ENCODE measurements at regions of chr4 and their contacts with region 1.

Region 1: GRCh38 chr4:53908661-53909078 is 155.7 kb downstream of the CHIC2 start:
- DNase-seq: peak; percentile 23
- H3K4me3 Mint-ChIP-seq: no peak overlapping the region
- H3K27ac Mint-ChIP-seq: no peak overlapping the region
- H3K4me1 Mint-ChIP-seq: peaks cover 12% of the 10 kb centered on the region
- H3K27me3 Mint-ChIP-seq: peaks cover 46% of the 10 kb centered on the region

Region 2: DNA sequence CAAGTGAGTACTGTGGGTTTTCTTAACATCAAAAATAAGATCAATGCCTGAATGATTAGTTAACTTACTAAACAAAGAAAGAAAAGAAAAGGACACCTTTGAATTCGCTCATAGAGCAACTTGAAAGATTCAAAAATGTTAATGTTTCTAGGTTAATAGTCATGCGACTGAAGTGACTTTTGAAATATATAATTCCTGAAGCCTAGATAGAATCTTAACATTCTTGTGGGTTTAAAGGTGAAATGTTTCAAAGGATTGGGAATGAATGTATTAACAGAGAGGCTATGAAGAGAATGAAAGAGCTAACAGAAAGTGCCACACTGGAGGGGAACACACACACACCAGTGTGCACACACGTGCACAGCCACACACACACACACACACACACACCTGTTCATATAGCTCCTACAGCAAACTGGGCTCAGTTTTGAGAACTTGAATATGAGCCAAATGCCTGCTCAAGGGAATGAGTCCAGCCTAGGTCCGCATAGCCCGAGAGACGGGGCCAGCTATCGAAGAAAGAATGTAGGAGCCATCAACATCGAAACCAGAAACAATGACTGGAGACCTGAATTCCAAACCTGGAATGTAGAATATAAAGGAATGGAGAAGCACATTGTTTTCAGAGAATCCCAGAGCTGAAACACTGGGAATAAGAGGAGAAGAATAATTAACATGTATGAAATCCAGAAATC is 1120.0 kb before region 1 on chr4:
- CTCF ChIA-PET with region 1: no interaction called
- intact Hi-C with region 1: no loop called
- DNase-seq: no peak
- H3K4me3 Mint-ChIP-seq: no peak overlapping the region
- H3K27ac Mint-ChIP-seq: no peak overlapping the region
- H3K4me1 Mint-ChIP-seq: no peaks in the 10 kb centered on the region
- H3K27me3 Mint-ChIP-seq: peaks cover 5% of the 10 kb centered on the region

Region 3: DNA sequence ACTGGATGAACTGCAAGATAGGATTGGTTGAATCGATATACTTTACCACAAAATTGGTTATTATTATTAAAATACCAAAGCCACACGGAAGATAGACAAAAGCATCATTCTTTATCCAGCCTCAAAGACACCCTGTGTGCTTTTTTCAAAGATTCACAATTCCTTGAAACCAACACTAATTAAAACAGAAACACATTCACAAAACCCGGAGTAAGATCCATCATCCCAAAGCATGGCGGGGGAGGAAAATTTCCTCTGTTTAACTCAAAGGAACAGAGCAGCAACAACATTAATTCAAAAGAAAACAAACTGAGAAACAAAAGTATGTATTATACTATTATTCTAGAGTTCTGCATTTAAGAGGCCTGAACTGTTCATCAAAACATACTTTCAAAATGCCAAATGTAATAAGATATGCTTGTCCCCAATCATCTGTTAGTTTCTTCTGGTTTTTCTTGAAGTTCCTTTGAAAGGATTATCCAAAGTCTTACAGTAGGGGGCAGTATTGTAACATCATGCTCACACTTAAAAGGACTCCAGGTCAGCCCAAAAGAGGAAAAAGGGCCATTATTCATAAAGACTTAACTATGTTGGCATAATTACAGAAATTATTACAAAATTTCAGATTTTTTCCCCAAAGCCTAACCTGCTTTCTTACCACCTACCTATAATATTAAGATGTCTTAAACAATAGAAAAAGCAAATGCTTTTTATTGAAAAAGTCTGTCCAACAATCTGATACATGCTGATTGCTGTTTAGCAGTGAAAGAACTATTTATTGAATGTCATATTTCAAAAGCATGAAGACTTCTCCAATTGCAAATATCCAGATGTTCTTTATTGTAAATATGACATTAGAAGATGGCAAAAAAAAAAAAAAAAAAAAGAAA is 711.5 kb before region 1 on chr4:
- CTCF ChIA-PET with region 1: interaction called, 3 read pairs
- intact Hi-C with region 1: loop called (anchors 2 kb)
- DNase-seq: no peak
- H3K4me3 Mint-ChIP-seq: no peak overlapping the region
- H3K27ac Mint-ChIP-seq: no peak overlapping the region
- H3K4me1 Mint-ChIP-seq: no peaks in the 10 kb centered on the region
- H3K27me3 Mint-ChIP-seq: no peaks in the 10 kb centered on the region

Region 4: DNA sequence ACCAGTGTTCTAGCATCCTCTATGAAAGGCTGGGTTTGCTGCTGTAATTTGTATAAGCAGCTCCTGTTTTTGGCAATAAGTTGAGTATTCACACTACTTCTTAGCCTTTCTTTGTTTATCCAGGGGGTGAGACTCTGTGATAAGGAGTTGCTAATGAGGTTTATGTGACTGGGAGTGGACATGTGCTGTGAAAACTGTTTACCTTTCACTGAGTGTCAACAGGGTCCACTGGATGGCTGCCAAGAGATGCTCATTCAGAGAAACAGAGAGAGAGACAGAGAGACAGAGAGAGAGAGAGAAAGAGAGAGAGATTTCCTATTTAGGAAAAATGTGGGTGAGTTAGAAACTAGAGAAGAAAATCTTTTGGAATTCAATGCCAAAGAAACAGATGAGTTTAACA is 78.2 kb before region 1 on chr4:
- CTCF ChIA-PET with region 1: no interaction called
- intact Hi-C with region 1: no loop called
- DNase-seq: no peak
- H3K4me3 Mint-ChIP-seq: no peak overlapping the region
- H3K27ac Mint-ChIP-seq: no peak overlapping the region
- H3K4me1 Mint-ChIP-seq: no peaks in the 10 kb centered on the region
- H3K27me3 Mint-ChIP-seq: peaks cover 23% of the 10 kb centered on the region

Region 5: GRCh38 chr4:53929955-53930798 is 21.5 kb after region 1 on chr4:
- CTCF ChIA-PET with region 1: interaction called, 24 read pairs
- intact Hi-C with region 1: loop called (anchors 1 kb)
- DNase-seq: peak; percentile 83
- H3K4me3 Mint-ChIP-seq: no peak overlapping the region
- H3K27ac Mint-ChIP-seq: no peak overlapping the region
- H3K4me1 Mint-ChIP-seq: no peaks in the 10 kb centered on the region
- H3K27me3 Mint-ChIP-seq: peaks cover 8% of the 10 kb centered on the region

Region 6: DNA sequence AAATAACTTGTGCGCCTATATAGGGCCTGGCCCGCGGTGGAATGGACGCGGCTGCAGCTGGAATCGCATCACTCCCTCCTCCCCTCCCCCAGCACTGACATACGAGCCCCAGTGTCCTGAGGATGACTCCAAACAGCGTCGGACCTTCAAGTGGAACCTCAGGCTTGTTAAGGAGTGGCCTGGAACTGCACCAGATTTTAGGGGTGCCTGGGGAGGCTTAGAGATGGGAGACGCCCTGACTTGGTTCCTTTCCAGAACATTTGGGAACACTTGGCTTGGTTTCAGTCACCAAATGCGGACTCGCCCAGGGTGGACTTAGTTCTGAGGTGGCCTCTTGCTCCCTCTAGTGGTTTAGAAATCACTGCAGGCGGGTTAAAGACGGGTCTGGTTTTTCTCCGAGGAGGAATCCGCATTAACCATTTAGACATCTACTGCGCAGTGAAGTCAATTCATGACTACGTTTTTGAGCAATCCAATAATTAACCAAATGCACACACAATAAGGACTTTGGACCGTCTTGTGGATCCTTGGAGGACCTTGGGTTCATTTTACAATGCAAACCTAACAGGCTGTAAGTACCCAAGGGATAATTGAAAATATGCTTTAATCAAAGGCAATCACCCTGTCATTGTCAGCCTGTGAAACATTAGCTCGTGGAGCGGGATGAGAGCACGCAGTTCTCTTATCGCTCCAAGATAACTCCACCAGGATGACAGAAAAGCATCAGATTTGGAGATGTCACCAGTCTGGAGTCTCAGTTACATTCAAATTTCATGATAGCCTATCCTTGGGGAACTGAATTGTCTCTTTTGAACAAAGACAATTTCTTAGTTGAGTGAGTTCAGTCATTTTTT is 309.2 kb after region 1 on chr4:
- CTCF ChIA-PET with region 1: interaction called, 25 read pairs
- intact Hi-C with region 1: loop called (anchors 1 kb)
- DNase-seq: peak; percentile 70
- H3K4me3 Mint-ChIP-seq: peak overlapping the region; percentile 22
- H3K27ac Mint-ChIP-seq: no peak overlapping the region
- H3K4me1 Mint-ChIP-seq: peaks cover 4% of the 10 kb centered on the region
- H3K27me3 Mint-ChIP-seq: peaks cover 29% of the 10 kb centered on the region

Region 7: DNA sequence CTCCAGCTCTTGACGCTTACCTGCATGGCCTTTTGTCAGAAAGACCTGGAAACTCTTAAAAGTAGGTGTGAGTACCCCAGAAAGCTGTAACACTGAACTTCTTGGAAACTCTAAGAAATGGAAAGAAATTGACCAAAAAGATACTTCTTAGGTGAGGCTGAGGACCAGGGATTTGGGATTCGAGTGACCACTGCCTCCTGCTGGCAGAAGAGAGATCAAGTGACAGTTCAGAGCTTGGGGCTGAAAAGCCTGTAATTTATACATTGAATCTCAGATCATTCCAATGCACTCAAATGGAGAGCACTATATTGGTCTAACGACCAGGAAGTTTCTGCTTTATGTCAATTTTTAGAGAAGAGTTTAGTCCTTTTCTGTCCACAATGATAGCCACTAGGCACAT is 525.0 kb after region 1 on chr4:
- CTCF ChIA-PET with region 1: no interaction called
- intact Hi-C with region 1: no loop called
- DNase-seq: no peak
- H3K4me3 Mint-ChIP-seq: no peak overlapping the region
- H3K27ac Mint-ChIP-seq: no peak overlapping the region
- H3K4me1 Mint-ChIP-seq: no peaks in the 10 kb centered on the region
- H3K27me3 Mint-ChIP-seq: peaks cover 32% of the 10 kb centered on the region

Region 8: GRCh38 chr4:54539500-54540029 is 630.9 kb after region 1 on chr4:
- CTCF ChIA-PET with region 1: no interaction called
- intact Hi-C with region 1: no loop called
- DNase-seq: peak; percentile 5
- H3K4me3 Mint-ChIP-seq: peak overlapping the region; percentile 5
- H3K27ac Mint-ChIP-seq: no peak overlapping the region
- H3K4me1 Mint-ChIP-seq: peaks cover 5% of the 10 kb centered on the region
- H3K27me3 Mint-ChIP-seq: peaks cover 19% of the 10 kb centered on the region